Caco-2 (cell line): ENCODE measurements at regions of chr5 and their contacts with region 1.

Region 1: GRCh38 chr5:83718195-83718825 is 2.3 kb downstream of the HAPLN1 start:
- DNase-seq: peak; percentile 57 to 73
- H3K4me3 ChIP-seq: no peak overlapping the region
- H3K4me3 Mint-ChIP-seq: peak overlapping the region; percentile 6
- H3K27ac Mint-ChIP-seq: no peak overlapping the region
- H3K4me1 ChIP-seq: peaks cover 5% of the 10 kb centered on the region
- H3K4me1 Mint-ChIP-seq: peaks cover 29% of the 10 kb centered on the region
- H3K27me3 ChIP-seq: no peaks in the 10 kb centered on the region; the same call in none of the 2 replicates
- H3K27me3 Mint-ChIP-seq: peaks cover 11% of the 10 kb centered on the region
- CTCF ChIP-seq: peak; percentile 81 to 88

Region 2: DNA sequence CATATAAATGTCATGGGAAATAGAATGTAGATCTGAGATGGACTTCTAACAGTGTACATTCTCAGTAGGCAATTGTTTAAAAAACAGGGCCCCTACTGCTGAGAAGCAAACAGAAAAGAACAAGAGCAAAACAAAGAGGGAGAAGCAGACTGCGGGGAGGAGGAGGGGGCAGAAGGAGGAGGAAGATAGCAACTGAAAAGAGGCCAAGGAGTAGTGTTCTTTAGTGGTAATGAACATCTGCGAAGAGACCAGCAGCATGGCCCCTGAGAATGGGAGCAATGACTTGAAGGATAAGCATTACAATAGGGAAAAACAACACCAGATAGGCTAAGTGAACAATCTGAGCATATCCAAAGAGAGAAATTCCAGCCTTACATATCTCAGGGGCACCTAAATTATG is 34.5 kb before region 1 on chr5:
- CTCF ChIA-PET with region 1: no interaction called
- POLR2A ChIA-PET with region 1: no interaction called
- intact Hi-C with region 1: no loop called
- DNase-seq: no peak
- H3K4me3 ChIP-seq: no peak overlapping the region
- H3K4me3 Mint-ChIP-seq: no peak overlapping the region
- H3K27ac Mint-ChIP-seq: no peak overlapping the region
- H3K4me1 ChIP-seq: peaks cover 7% of the 10 kb centered on the region
- H3K4me1 Mint-ChIP-seq: peaks cover 14% of the 10 kb centered on the region
- H3K27me3 ChIP-seq: no peaks in the 10 kb centered on the region
- H3K27me3 Mint-ChIP-seq: no peaks in the 10 kb centered on the region
- CTCF ChIP-seq: no peak

Region 3: GRCh38 chr5:83780699-83781350 is 62.5 kb after region 1 on chr5:
- CTCF ChIA-PET with region 1: no interaction called
- POLR2A ChIA-PET with region 1: no interaction called
- intact Hi-C with region 1: loop called (anchors 5 kb)
- DNase-seq: no peak
- H3K4me3 ChIP-seq: no peak overlapping the region
- H3K4me3 Mint-ChIP-seq: no peak overlapping the region
- H3K27ac Mint-ChIP-seq: no peak overlapping the region
- H3K4me1 ChIP-seq: peaks cover 21% of the 10 kb centered on the region
- H3K4me1 Mint-ChIP-seq: peaks cover 25% of the 10 kb centered on the region
- H3K27me3 ChIP-seq: no peaks in the 10 kb centered on the region
- H3K27me3 Mint-ChIP-seq: no peaks in the 10 kb centered on the region
- CTCF ChIP-seq: no peak

Region 4: DNA sequence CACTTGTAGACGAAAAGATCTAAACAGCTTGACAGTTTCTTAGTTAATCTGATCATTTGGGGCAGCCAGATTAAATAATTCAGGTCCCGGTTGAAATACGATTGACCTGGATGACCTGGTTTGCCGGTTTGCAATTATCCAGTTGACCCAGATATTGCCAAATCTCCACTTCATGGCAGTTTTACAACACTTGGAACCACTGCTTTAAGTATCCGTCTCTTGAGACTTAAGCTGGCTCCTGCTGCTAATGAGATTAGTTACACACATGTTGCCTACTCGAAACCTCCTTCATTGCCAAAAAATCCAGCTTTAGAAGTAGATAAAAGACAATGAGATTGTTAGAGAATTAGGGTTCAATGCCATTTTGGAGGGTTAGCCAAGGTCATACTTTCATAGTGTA is 138.6 kb after region 1 on chr5:
- CTCF ChIA-PET with region 1: no interaction called
- POLR2A ChIA-PET with region 1: no interaction called
- intact Hi-C with region 1: loop called (anchors 5 kb)
- DNase-seq: no peak
- H3K4me3 ChIP-seq: no peak overlapping the region
- H3K4me3 Mint-ChIP-seq: no peak overlapping the region
- H3K27ac Mint-ChIP-seq: no peak overlapping the region
- H3K4me1 ChIP-seq: peaks cover 22% of the 10 kb centered on the region
- H3K4me1 Mint-ChIP-seq: peaks cover 14% of the 10 kb centered on the region
- H3K27me3 ChIP-seq: no peaks in the 10 kb centered on the region
- H3K27me3 Mint-ChIP-seq: no peaks in the 10 kb centered on the region
- CTCF ChIP-seq: no peak

Region 5: GRCh38 chr5:84088995-84089394 is 370.7 kb after region 1 on chr5:
- CTCF ChIA-PET with region 1: no interaction called
- POLR2A ChIA-PET with region 1: no interaction called
- intact Hi-C with region 1: loop called (anchors 2 kb)
- DNase-seq: peak in 1 of 2 experiments; percentile 19
- H3K4me3 ChIP-seq: no peak overlapping the region
- H3K4me3 Mint-ChIP-seq: no peak overlapping the region
- H3K27ac Mint-ChIP-seq: no peak overlapping the region
- H3K4me1 ChIP-seq: peaks cover 8% of the 10 kb centered on the region; the same call in 1 of the 2 replicates
- H3K4me1 Mint-ChIP-seq: peaks cover 9% of the 10 kb centered on the region
- H3K27me3 ChIP-seq: no peaks in the 10 kb centered on the region; the same call in 1 of the 2 replicates
- H3K27me3 Mint-ChIP-seq: peaks cover 10% of the 10 kb centered on the region
- CTCF ChIP-seq: peak; percentile 25 to 30

Region 6: GRCh38 chr5:84382363-84383295 is 664.3 kb after region 1 on chr5:
- CTCF ChIA-PET with region 1: no interaction called
- POLR2A ChIA-PET with region 1: no interaction called
- intact Hi-C with region 1: loop called (anchors 1 kb)
- DNase-seq: peak; percentile 45 to 52
- H3K4me3 ChIP-seq: peak overlapping the region; percentile 29
- H3K4me3 Mint-ChIP-seq: peak overlapping the region; percentile 68
- H3K27ac Mint-ChIP-seq: no peak overlapping the region
- H3K4me1 ChIP-seq: no peaks in the 10 kb centered on the region
- H3K4me1 Mint-ChIP-seq: peaks cover 6% of the 10 kb centered on the region
- H3K27me3 ChIP-seq: no peaks in the 10 kb centered on the region
- H3K27me3 Mint-ChIP-seq: peaks cover 23% of the 10 kb centered on the region
- CTCF ChIP-seq: no peak